Transverse colon (tissue), 4 donors: ENCODE measurements at regions of chr1 and their contacts with region 1.

Region 1: GRCh38 chr1:200738740-200739498 is at the start of gene CAMSAP2:
- DNase-seq: peak; percentile 86
- H3K4me3 ChIP-seq: peak within 1 kb of the TSS; percentile 63 to 98 (median 78)
- H3K27ac ChIP-seq: peak within 1 kb of the TSS; percentile 92 to 100 (median 98)
- H3K4me1 ChIP-seq: peaks cover 0 to 39% (median 17%) of the 10 kb centered on the region in 4 donors
- H3K27me3 ChIP-seq: no peaks in the 10 kb centered on the region
- CTCF ChIP-seq: no peak
- EP300 ChIP-seq: no peak
- POLR2A ChIP-seq: peak; percentile 79
- total RNA-seq, gene CAMSAP2: 8.2 to 12.5 (median 9.1) TPM

Region 2: GRCh38 chr1:200336111-200336845 is 402.6 kb before region 1 on chr1:
- in situ Hi-C with region 1: no loop called
- intact Hi-C with region 1: no loop called
- DNase-seq: no peak
- H3K4me3 ChIP-seq: no peak overlapping the region
- H3K27ac ChIP-seq: no peak overlapping the region
- H3K4me1 ChIP-seq: no peaks in the 10 kb centered on the region
- H3K27me3 ChIP-seq: no peaks in the 10 kb centered on the region
- CTCF ChIP-seq: no peak
- EP300 ChIP-seq: no peak
- POLR2A ChIP-seq: no peak

Region 3: GRCh38 chr1:200669314-200670241 is 69.3 kb before region 1 on chr1 and contains the start of gene DDX59:
- in situ Hi-C with region 1: no loop called
- intact Hi-C with region 1: loop called (anchors 1 kb)
- DNase-seq: peak; percentile 96
- H3K4me3 ChIP-seq: peak within 1 kb of the TSS; percentile 69 to 96 (median 85)
- H3K27ac ChIP-seq: peak within 1 kb of the TSS; percentile 98 to 100 (median 100)
- H3K4me1 ChIP-seq: peaks cover 10 to 34% (median 12%) of the 10 kb centered on the region in 4 donors
- H3K27me3 ChIP-seq: no peaks in the 10 kb centered on the region
- CTCF ChIP-seq: no peak
- EP300 ChIP-seq: peak; percentile 93
- POLR2A ChIP-seq: peak; percentile 96
- total RNA-seq, gene DDX59: 8.6 to 17.5 (median 14.6) TPM

Region 4: DNA sequence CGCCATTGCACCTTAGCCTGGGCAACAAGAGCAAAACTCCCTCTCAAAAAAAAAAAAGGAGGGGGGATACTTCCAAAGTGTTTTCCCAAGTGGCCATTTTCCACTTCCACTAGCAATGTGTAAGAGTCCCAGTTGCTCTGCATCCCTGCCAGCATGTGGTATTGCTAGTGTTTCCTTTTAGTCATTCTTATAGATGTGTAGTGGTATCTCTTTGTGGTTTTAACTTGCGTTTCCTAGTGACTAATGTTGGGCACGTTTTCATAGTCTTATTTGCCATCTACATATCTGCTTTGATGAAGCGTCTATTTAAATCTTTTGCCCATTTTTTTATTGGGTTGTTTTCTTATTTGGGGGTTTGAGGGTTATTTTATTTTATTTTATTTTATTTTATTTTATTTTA is 186.9 kb after region 1 on chr1:
- in situ Hi-C with region 1: no loop called
- intact Hi-C with region 1: no loop called
- DNase-seq: no peak
- H3K4me3 ChIP-seq: no peak overlapping the region
- H3K27ac ChIP-seq: no peak overlapping the region
- H3K4me1 ChIP-seq: peaks cover 0 to 6% (median 0%) of the 10 kb centered on the region in 4 donors
- H3K27me3 ChIP-seq: no peaks in the 10 kb centered on the region
- CTCF ChIP-seq: no peak
- EP300 ChIP-seq: no peak
- POLR2A ChIP-seq: no peak